ENCODE measurements at regions of chr1 and their contacts with region 1.

Region 1: DNA sequence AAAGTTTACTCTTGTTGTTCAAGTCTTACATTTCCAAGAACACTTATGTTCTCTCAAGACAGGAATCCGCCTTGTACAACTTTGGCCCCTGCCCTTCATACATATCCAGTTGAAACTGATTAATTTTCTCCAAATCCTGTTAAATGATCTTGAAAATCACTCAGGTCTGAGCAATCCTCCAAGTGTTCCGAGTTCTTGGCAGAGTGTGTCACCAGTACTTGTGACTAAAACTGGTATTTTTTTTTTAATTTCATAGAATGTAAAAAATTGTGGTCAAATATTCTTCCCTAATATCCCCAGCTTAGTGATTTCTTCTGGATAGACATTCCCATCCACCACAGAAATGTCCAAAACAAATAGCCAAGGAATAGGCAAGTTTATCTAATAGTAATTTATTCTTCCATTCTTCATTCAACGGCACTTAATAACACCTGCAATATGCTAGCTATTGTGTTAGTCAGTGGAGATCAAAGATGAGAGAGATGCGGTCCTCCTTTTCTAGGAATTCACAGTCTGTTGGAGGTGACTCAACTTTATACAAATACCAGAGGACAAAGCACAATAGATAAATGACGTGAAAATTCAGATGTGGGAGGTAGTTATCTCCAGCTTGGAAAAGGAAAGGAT is 71.4 kb downstream of the DIRAS3 start:
- DNase-seq: no peak
- ATAC-seq: no peak
- H3K4me3 ChIP-seq: no peak overlapping the region
- H3K27ac ChIP-seq: no peak overlapping the region
- H3K4me1 ChIP-seq: peaks cover 0 to 12% (median under 1%) of the 10 kb centered on the region in 9 donors
- H3K27me3 ChIP-seq: no peaks in the 10 kb centered on the region
- CTCF ChIP-seq: no peak

Region 2: GRCh38 chr1:67097305-67097704 is 881.7 kb before region 1 on chr1:
- intact Hi-C with region 1: loop called in 1 of 10 experiments (anchors 5 kb)
- DNase-seq: no peak
- ATAC-seq: no peak
- H3K4me3 ChIP-seq: no peak overlapping the region
- H3K27ac ChIP-seq: no peak overlapping the region
- H3K4me1 ChIP-seq: no peaks in the 10 kb centered on the region
- H3K27me3 ChIP-seq: peaks cover 0 to 18% (median 7%) of the 10 kb centered on the region in 7 donors
- CTCF ChIP-seq: no peak

Region 3: GRCh38 chr1:67937651-67938050 is 41.4 kb before region 1 on chr1:
- intact Hi-C with region 1: no loop called
- DNase-seq: no peak
- ATAC-seq: peak in 6 of 8 donors; percentile 32 to 63 (median 45)
- H3K4me3 ChIP-seq: no peak overlapping the region
- H3K27ac ChIP-seq: peak overlapping the region in 2 of 10 donors; percentile 60 to 70
- H3K4me1 ChIP-seq: peaks cover 5 to 31% (median 14%) of the 10 kb centered on the region in 9 donors
- H3K27me3 ChIP-seq: no peaks in the 10 kb centered on the region
- CTCF ChIP-seq: no peak

Measured in heart right ventricle (tissue), 16 donors.